Panc1 (cell line): ENCODE measurements at regions of chr7 and their contacts with region 1.

Region 1: GRCh38 chr7:4973728-4974198 is 14.8 kb upstream of the MMD2 start:
- DNase-seq: peak; percentile 74
- ATAC-seq: peak; percentile 98
- H3K4me3 ChIP-seq: peak overlapping the region; percentile 72 to 73
- H3K27ac ChIP-seq: peak overlapping the region; percentile 70; the same call in 1 of the 2 replicates
- H3K4me1 ChIP-seq: no peaks in the 10 kb centered on the region
- H3K27me3 ChIP-seq: no peaks in the 10 kb centered on the region
- CTCF ChIP-seq: peak; percentile 95

Region 2: GRCh38 chr7:4849369-4849768 is 124.4 kb before region 1 on chr7:
- CTCF ChIA-PET with region 1: no interaction called
- POLR2A ChIA-PET with region 1: no interaction called
- in situ Hi-C with region 1: no loop called
- intact Hi-C with region 1: no loop called
- DNase-seq: peak; percentile 10
- ATAC-seq: peak; percentile 83
- H3K4me3 ChIP-seq: no peak overlapping the region
- H3K27ac ChIP-seq: no peak overlapping the region
- H3K4me1 ChIP-seq: no peaks in the 10 kb centered on the region
- H3K27me3 ChIP-seq: 0 out of 2 replicates have a peak, but pooled peaks cover 3% of the 10 kb centered on the region
- CTCF ChIP-seq: peak; percentile 77

Region 3: DNA sequence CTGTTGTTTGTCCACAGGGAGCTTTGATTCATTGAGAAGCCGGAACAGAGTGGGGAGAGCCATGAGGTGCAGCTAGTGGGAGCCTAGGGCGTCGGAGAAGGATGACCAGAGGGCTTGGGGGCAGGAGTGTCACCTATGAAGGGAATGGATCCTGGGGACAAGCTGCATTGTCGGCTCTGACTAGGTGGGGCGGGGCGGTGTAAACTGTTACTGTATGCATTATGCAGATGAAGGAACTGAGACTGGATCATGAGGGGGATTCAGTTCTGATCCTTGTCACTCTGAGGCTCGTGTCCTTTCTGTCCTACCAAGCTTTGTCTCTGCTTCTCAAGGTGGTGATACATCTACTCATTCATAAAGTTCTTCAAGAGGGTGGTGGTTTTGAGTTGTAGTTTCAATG is 25.1 kb after region 1 on chr7:
- CTCF ChIA-PET with region 1: no interaction called
- POLR2A ChIA-PET with region 1: interaction called, 12 read pairs
- in situ Hi-C with region 1: no loop called
- intact Hi-C with region 1: no loop called
- DNase-seq: no peak
- ATAC-seq: no peak
- H3K4me3 ChIP-seq: no peak overlapping the region
- H3K27ac ChIP-seq: no peak overlapping the region
- H3K4me1 ChIP-seq: no peaks in the 10 kb centered on the region
- H3K27me3 ChIP-seq: no peaks in the 10 kb centered on the region
- CTCF ChIP-seq: no peak

Region 4: DNA sequence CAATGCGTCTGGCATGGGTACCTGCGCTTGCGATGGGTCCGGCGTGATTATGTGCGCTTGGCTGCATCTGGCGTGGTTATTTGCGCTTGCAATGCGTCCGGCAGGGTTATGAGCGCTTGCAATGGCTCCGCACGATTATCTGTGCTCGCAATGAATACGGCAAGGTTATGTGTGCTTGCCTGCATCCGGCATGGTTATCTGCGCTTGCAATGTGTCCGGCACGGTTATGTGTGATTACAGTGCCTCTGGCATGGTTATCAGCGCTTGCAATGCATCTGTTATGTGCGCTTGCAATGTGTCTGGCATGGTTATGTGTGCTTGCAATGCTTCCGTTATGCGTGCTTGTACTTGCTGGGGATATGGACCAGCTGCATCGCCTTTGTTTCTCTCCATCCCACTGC is 109.5 kb after region 1 on chr7:
- CTCF ChIA-PET with region 1: interaction called, 14 read pairs
- POLR2A ChIA-PET with region 1: interaction called, 3 read pairs
- in situ Hi-C with region 1: no loop called
- intact Hi-C with region 1: loop called (anchors 10 kb)
- DNase-seq: no peak
- ATAC-seq: no peak
- H3K4me3 ChIP-seq: no peak overlapping the region
- H3K27ac ChIP-seq: no peak overlapping the region
- H3K4me1 ChIP-seq: no peaks in the 10 kb centered on the region
- H3K27me3 ChIP-seq: peaks cover 3% of the 10 kb centered on the region; the same call in 1 of the 2 replicates
- CTCF ChIP-seq: no peak

Region 5: DNA sequence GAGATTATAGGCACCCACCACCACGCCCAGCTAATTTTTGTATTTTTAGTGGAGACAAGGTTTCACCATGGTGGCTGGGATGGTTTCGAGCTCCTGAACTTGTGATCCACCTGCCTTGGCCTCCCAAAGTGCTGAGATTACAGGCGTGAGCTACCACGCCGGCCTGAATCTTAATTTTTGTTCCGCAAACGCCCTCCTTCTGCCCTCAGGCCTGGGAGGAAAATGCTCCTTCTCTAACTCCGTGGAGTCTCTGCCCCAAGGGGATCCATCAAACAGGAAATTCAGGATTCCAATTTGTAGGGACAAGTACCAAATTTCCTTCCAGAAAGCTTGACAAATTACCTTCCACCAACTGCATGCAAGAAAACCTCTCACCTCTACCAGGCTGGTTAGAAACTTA is 115.1 kb after region 1 on chr7:
- CTCF ChIA-PET with region 1: interaction called, 14 read pairs
- POLR2A ChIA-PET with region 1: no interaction called
- in situ Hi-C with region 1: no loop called
- intact Hi-C with region 1: loop called (anchors 10 kb)
- DNase-seq: no peak
- ATAC-seq: no peak
- H3K4me3 ChIP-seq: no peak overlapping the region
- H3K27ac ChIP-seq: no peak overlapping the region
- H3K4me1 ChIP-seq: no peaks in the 10 kb centered on the region
- H3K27me3 ChIP-seq: peaks cover 3% of the 10 kb centered on the region; the same call in 1 of the 2 replicates
- CTCF ChIP-seq: no peak